Aorta (tissue), 5 donors: ENCODE measurements at regions of chr1 and their contacts with region 1.

Region 1: DNA sequence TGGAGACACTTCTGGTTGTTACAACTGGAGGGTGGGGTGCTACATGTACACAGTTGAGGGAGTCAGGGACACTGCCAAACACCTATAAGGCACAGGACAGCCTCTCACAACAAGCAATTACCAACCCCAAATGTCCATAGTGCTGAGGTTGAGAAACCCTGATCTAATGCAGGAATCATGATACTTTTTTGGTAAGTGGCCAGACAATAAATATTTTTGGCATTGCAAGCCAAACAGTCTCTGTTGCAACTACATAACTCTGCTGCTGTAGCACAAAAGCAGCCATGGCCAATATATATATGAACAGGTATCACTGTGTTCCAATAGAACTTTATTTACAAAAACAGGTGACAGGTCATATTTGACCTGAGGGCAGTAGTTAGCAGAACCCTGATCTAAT is 177.5 kb downstream of the ASTN1 start:
- DNase-seq: no peak
- ATAC-seq: no peak
- H3K4me3 ChIP-seq: no peak overlapping the region
- H3K27ac ChIP-seq: no peak overlapping the region
- H3K4me1 ChIP-seq: peaks cover 0 to 2% of the 10 kb centered on the region in 2 donors
- H3K27me3 ChIP-seq: no peaks in the 10 kb centered on the region

Region 2: DNA sequence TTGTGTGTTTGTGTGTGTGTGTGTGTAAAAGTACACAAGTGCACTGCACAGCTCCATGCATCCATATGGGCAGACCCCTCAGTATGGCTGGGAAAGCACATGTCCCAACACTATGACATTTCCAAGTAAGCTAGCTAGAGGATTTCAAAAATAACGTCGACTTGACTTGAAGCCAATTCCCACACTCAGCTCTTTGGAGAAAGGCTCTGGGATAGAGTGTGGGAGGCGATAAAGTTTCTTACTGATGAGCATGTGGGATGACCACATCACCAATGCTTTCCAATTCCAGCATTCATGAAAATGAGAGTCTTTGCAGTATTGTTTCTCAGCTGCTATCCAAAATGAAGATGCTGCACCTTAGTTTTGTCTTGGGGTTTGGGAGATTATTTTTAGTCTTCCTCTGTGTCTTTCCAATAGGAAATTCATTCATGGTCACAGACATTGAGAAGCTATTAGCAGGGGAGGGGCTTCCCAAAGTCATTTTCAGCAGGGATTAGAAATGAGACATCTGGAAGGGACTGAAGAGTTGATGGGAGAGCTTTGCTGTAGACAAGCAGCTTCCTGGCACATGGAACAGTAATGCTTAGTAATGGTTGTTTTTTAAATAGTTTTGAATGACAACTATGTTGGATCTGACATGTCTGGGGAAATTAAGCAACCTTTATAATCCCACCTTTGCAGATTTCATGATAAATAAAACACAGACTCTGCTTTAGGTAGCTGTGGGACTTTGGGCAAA is 34.0 kb after region 1 on chr1:
- intact Hi-C with region 1: loop called in 1 of 2 experiments (anchors 1 kb)
- DNase-seq: no peak
- ATAC-seq: no peak
- H3K4me3 ChIP-seq: no peak overlapping the region
- H3K27ac ChIP-seq: no peak overlapping the region
- H3K4me1 ChIP-seq: peaks cover 0 to 1% of the 10 kb centered on the region in 2 donors
- H3K27me3 ChIP-seq: no peaks in the 10 kb centered on the region